HCT116 (cell line): ENCODE measurements at regions of chr6 and their contacts with region 1.

Region 1: GRCh38 chr6:119742188-119742803 is 392.7 kb upstream of the MAN1A1 start:
- DNase-seq: peak; percentile 53
- ATAC-seq: peak; percentile 93
- H3K4me3 ChIP-seq: no peak overlapping the region
- H3K27ac ChIP-seq: no peak overlapping the region
- H3K4me1 ChIP-seq: no peaks in the 10 kb centered on the region
- H3K27me3 ChIP-seq: no peaks in the 10 kb centered on the region
- CTCF ChIP-seq: peak; percentile 76 to 94 (median 85); a peak in 5 of 6 replicates
- POLR2A ChIP-seq: no peak
- RAD21 ChIP-seq: peak; percentile 89

Region 2: GRCh38 chr6:119156757-119157505 is 585.4 kb before region 1 on chr6:
- CTCF ChIA-PET with region 1: no interaction called
- POLR2A ChIA-PET with region 1: no interaction called
- RAD21 ChIA-PET with region 1: no interaction called
- intact Hi-C with region 1: no loop called
- DNase-seq: no peak
- ATAC-seq: no peak
- H3K4me3 ChIP-seq: no peak overlapping the region
- H3K27ac ChIP-seq: no peak overlapping the region
- H3K4me1 ChIP-seq: peaks cover 5 to 9% of the 10 kb centered on the region in 2 experiments; a peak in 3 of 4 replicates
- H3K27me3 ChIP-seq: no peaks in the 10 kb centered on the region
- CTCF ChIP-seq: no peak
- POLR2A ChIP-seq: no peak
- RAD21 ChIP-seq: no peak

Region 3: GRCh38 chr6:119294984-119295383 is 447.3 kb before region 1 on chr6:
- CTCF ChIA-PET with region 1: no interaction called
- POLR2A ChIA-PET with region 1: no interaction called
- RAD21 ChIA-PET with region 1: no interaction called
- intact Hi-C with region 1: no loop called
- DNase-seq: no peak
- ATAC-seq: no peak
- H3K4me3 ChIP-seq: no peak overlapping the region
- H3K27ac ChIP-seq: no peak overlapping the region
- H3K4me1 ChIP-seq: no peaks in the 10 kb centered on the region
- H3K27me3 ChIP-seq: no peaks in the 10 kb centered on the region
- CTCF ChIP-seq: no peak
- POLR2A ChIP-seq: no peak
- RAD21 ChIP-seq: no peak

Region 4: GRCh38 chr6:119978274-119978889 is 236.1 kb after region 1 on chr6:
- CTCF ChIA-PET with region 1: no interaction called
- POLR2A ChIA-PET with region 1: no interaction called
- RAD21 ChIA-PET with region 1: no interaction called
- intact Hi-C with region 1: loop called (anchors 1 kb)
- DNase-seq: no peak
- ATAC-seq: peak; percentile 81
- H3K4me3 ChIP-seq: no peak overlapping the region
- H3K27ac ChIP-seq: no peak overlapping the region
- H3K4me1 ChIP-seq: no peaks in the 10 kb centered on the region
- H3K27me3 ChIP-seq: no peaks in the 10 kb centered on the region
- CTCF ChIP-seq: peak; percentile 50 to 75 (median 72); a peak in 5 of 6 replicates
- POLR2A ChIP-seq: no peak
- RAD21 ChIP-seq: peak; percentile 58

Region 5: DNA sequence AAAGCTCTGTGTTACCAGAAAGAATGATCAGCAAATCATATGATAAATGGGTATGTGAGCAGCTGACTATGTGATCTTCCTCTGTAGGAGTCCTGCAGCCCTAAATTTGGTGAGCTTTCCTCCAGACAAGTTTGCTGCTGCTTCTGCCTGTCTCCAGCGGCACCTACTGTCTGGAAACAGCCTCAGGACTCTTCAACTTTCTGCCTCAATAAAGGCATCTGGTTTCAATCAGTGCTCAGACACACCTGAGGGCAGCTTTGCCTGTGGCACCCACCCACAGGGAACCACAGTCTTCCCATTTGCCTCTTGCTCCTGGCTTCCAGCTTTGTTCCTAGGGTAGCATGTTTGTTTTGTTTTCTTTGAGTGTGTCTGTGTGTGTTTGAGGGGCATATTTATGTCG is 335.2 kb after region 1 on chr6:
- CTCF ChIA-PET with region 1: no interaction called
- POLR2A ChIA-PET with region 1: no interaction called
- RAD21 ChIA-PET with region 1: no interaction called
- intact Hi-C with region 1: loop called (anchors 1 kb)
- DNase-seq: peak; percentile 23
- ATAC-seq: peak; percentile 82
- H3K4me3 ChIP-seq: no peak overlapping the region
- H3K27ac ChIP-seq: no peak overlapping the region
- H3K4me1 ChIP-seq: no peaks in the 10 kb centered on the region
- H3K27me3 ChIP-seq: no peaks in the 10 kb centered on the region
- CTCF ChIP-seq: peak; percentile 36 to 46 (median 38); a peak in 5 of 6 replicates
- POLR2A ChIP-seq: no peak
- RAD21 ChIP-seq: peak; percentile 82

Region 6: GRCh38 chr6:120378582-120379220 is 636.4 kb after region 1 on chr6:
- CTCF ChIA-PET with region 1: no interaction called
- POLR2A ChIA-PET with region 1: no interaction called
- RAD21 ChIA-PET with region 1: no interaction called
- intact Hi-C with region 1: loop called (anchors 1 kb)
- DNase-seq: peak; percentile 70
- ATAC-seq: peak; percentile 93
- H3K4me3 ChIP-seq: no peak overlapping the region
- H3K27ac ChIP-seq: no peak overlapping the region
- H3K4me1 ChIP-seq: no peaks in the 10 kb centered on the region
- H3K27me3 ChIP-seq: no peaks in the 10 kb centered on the region
- CTCF ChIP-seq: peak; percentile 65 to 99 (median 82)
- POLR2A ChIP-seq: no peak
- RAD21 ChIP-seq: peak; percentile 82

Region 7: DNA sequence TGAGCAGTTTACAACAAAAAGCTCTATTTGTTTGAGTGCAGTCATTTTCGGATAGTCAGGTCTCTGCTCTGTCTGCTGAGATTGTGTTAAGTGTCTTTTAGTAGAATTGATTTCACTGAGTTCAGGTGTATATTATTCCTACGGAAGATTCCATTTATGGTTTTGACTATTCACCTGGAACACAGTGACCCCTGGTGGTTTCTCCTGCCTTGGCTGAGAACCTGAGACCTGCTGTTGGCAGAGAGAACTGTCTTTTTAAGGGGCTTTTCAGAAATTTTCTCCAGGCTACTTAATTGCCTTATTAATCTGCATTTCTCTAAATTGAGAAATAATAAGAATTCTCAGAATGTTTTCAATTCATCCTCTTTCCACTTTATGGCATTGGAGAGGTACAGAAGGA is 1084.0 kb after region 1 on chr6:
- CTCF ChIA-PET with region 1: no interaction called
- POLR2A ChIA-PET with region 1: no interaction called
- RAD21 ChIA-PET with region 1: no interaction called
- intact Hi-C with region 1: loop called (anchors 1 kb)
- DNase-seq: peak; percentile 53
- ATAC-seq: peak; percentile 87
- H3K4me3 ChIP-seq: no peak overlapping the region
- H3K27ac ChIP-seq: no peak overlapping the region
- H3K4me1 ChIP-seq: no peaks in the 10 kb centered on the region
- H3K27me3 ChIP-seq: no peaks in the 10 kb centered on the region
- CTCF ChIP-seq: peak; percentile 65 to 84 (median 84); a peak in 5 of 6 replicates
- POLR2A ChIP-seq: no peak
- RAD21 ChIP-seq: peak; percentile 79